ENCODE measurements at regions of chr3 and their contacts with region 1.

Region 1: DNA sequence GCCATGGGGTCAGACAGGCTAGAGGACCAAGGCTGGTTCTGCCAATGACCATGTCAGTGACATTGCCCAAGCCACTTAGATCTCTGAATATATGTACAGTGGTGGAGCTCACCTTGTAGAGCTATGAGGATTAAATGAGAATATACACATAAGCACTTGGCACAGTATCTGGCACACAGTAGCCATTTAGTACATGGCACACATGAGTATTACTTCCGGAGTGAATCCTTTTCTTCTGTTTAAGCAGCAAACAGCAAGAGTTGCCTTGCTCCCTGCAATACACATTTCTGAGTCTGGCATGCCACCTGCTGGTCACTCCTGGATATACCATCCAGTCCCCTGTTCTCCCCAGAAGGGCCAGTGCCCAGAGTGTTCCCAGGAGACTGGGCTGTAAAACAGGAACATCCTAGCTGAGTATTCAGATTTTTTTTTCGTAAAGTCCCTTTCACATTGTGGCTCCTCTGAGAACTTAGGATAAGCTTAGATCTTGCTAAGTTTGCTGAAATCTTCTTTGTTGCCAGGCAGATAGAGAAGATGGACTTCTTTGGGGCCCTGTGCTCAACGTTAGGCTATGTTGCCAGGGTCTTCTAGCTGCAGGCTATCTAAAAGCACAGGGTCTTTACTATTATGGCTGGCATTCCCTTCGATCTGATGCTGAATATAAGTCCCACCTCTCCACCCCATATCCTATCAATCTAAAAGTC is 203.4 kb downstream of the ADAMTS9 start:
- DNase-seq: peak; percentile 69
- CTCF ChIP-seq: peak; percentile 83

Region 2: GRCh38 chr3:64016941-64017620 is 467.4 kb before region 1 on chr3:
- CTCF ChIA-PET with region 1: interaction called, 43 read pairs
- POLR2A ChIA-PET with region 1: no interaction called
- DNase-seq: no peak
- CTCF ChIP-seq: no peak

Region 3: DNA sequence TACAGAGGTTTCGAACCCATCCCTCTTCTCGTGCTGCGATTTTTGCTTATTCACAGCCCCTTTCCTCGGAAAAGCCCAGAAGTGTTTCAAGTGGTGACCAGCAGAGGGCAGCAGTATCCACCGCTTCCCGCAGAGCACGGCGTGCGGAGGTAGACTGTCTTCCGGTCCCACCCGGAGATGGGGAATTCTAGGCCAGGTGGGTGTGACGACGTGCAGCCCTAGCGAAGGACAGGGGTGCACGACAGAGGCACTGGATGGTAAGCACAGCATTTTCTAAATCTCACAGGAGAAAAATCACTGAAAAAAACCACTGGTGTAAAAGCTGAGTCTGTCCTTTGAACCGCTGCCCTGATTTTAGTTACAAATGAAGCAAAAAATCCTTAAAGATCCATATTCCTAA is 453.7 kb before region 1 on chr3:
- CTCF ChIA-PET with region 1: interaction called, 127 read pairs
- POLR2A ChIA-PET with region 1: no interaction called
- DNase-seq: peak; percentile 78
- CTCF ChIP-seq: peak; percentile 83

Region 4: GRCh38 chr3:64224826-64225610 is 259.4 kb before region 1 on chr3 and contains the start of gene PRICKLE2:
- CTCF ChIA-PET with region 1: interaction called, 12 read pairs
- POLR2A ChIA-PET with region 1: no interaction called
- DNase-seq: peak; percentile 46
- CTCF ChIP-seq: no peak

Region 5: GRCh38 chr3:64445321-64446300 is 38.8 kb before region 1 on chr3:
- CTCF ChIA-PET with region 1: interaction called, 17 read pairs
- POLR2A ChIA-PET with region 1: no interaction called
- DNase-seq: peak; percentile 24
- CTCF ChIP-seq: no peak

Region 6: DNA sequence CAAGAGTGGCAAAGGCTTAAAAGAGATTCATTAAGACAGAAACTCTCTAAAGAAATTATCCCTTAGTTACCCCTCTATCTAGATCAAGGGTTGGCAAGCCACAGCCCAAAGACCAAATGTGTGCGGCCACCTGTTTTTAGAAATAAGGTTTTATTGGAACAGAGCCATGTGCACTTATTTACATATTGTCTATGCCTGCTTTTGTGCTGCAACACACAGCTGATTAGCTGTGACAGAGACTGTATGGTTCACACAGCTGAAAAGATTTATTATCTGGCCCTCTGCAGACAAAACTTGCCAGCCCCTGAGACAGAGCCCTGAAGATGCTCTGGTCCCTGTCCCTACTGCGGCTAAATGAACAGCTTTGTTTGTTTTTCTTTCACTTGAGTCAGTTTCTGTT is 115.2 kb after region 1 on chr3:
- CTCF ChIA-PET with region 1: no interaction called
- POLR2A ChIA-PET with region 1: no interaction called
- DNase-seq: no peak
- CTCF ChIP-seq: no peak